Caco-2 (cell line): ENCODE measurements at regions of chr17 and their contacts with region 1.

Region 1: DNA sequence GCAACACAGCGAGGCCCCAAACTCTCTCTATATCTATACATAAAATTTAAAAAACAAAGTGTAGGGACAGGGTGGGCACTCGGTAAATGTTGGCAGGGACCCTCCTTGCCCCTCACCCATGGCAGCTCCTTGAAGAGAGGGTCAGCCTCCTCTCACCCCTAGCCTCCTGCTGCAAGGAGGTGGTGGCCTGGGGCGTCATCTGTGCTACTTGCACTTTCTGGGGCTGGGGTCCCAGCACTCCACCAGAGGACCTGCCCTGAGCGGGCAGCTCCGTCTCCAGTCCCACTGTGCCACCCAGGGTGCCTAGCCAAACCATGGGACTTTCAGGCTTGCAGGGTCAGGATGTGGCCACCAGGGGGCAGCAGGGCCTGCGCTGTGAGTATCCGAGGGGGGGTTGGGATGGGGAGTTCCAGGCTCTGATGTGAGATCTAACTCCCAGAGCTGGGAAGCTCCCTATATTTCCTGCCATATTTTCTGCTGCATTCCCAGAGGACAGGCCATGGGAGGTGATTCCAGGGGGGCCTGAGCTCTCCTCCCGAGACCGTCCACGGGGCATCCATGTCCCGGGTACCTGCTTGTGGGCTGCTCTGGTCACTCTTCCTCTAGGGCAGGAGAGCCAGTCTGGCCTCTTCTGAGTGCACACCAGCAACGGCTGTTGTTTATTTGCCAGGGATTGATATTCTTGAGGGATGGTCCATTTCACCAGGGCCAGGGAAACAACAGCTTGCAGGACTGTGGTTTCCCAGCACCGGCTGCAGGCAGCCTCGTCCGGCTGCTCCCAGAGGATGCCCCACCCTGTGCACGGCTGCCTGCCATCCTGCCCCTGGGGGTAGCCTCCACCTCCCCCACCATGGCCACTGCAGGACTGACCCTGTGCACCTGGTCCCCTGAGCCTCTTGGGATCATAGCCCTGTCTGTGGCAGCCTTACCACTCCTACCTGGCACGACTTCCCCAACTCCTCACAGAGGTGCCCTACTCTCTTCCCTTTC is 1.1 kb downstream of the GPR142 start:
- DNase-seq: peak; percentile 72 to 75
- H3K4me3 ChIP-seq: no peak overlapping the region
- H3K4me3 Mint-ChIP-seq: no peak overlapping the region
- H3K27ac Mint-ChIP-seq: no peak overlapping the region
- H3K4me1 ChIP-seq: peaks cover 7% of the 10 kb centered on the region
- H3K4me1 Mint-ChIP-seq: peaks cover 5% of the 10 kb centered on the region
- H3K27me3 ChIP-seq: no peaks in the 10 kb centered on the region
- H3K27me3 Mint-ChIP-seq: no peaks in the 10 kb centered on the region
- CTCF ChIP-seq: peak; percentile 88 to 97

Region 2: DNA sequence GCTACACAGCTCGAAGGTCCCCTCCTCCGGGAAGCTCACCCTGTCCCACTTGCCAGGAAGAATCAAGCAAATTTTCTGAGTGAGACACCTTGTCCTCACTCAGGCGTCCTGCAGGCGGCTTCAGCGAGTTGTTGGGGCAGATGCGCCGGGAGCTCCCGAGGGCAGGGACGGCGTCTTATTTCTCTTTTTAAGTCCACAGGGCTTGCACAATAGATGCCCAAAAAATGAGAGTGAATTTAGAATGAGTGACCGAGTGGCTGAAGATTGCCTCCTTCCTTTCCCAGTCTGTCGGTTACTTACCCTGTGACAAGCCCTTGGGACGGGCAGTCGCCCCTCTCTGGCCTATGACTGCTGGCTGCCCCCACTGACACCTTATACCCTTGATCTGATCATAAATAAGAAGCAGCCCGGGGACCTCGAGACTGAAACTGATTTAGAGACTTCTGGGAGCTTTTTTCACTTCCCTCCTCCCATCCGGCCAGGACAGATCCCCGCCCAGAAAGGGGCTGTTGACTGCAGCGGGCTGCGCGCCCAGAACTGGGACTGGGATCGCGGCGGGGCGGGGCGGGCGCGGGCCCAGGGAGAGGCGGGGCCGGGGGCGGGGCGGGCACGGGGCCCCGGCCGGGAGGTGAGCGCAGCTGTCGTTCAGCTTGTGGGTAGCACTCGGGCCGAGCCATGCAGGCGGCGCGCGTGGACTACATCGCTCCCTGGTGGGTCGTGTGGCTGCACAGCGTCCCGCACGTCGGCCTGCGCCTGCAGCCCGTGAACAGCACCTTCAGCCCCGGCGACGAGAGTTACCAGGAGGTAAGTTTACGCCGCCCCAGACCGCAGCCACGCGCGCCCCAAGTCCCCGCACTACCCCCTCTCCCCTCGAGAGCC is 155.2 kb before region 1 on chr17 and contains the start of gene TTYH2:
- CTCF ChIA-PET with region 1: interaction called, 6 read pairs
- POLR2A ChIA-PET with region 1: no interaction called
- intact Hi-C with region 1: loop called (anchors 10 kb)
- DNase-seq: peak; percentile 86 to 88
- H3K4me3 ChIP-seq: peak within 1 kb of the TSS; percentile 67
- H3K4me3 Mint-ChIP-seq: peak within 1 kb of the TSS; percentile 76
- H3K27ac Mint-ChIP-seq: peak within 1 kb of the TSS; percentile 83
- H3K4me1 ChIP-seq: peaks cover 21% of the 10 kb centered on the region
- H3K4me1 Mint-ChIP-seq: peaks cover 26% of the 10 kb centered on the region
- H3K27me3 ChIP-seq: no peaks in the 10 kb centered on the region
- H3K27me3 Mint-ChIP-seq: no peaks in the 10 kb centered on the region
- CTCF ChIP-seq: no peak
- total RNA-seq, gene TTYH2: 4.6 and 5.4 TPM in 2 replicates

Region 3: DNA sequence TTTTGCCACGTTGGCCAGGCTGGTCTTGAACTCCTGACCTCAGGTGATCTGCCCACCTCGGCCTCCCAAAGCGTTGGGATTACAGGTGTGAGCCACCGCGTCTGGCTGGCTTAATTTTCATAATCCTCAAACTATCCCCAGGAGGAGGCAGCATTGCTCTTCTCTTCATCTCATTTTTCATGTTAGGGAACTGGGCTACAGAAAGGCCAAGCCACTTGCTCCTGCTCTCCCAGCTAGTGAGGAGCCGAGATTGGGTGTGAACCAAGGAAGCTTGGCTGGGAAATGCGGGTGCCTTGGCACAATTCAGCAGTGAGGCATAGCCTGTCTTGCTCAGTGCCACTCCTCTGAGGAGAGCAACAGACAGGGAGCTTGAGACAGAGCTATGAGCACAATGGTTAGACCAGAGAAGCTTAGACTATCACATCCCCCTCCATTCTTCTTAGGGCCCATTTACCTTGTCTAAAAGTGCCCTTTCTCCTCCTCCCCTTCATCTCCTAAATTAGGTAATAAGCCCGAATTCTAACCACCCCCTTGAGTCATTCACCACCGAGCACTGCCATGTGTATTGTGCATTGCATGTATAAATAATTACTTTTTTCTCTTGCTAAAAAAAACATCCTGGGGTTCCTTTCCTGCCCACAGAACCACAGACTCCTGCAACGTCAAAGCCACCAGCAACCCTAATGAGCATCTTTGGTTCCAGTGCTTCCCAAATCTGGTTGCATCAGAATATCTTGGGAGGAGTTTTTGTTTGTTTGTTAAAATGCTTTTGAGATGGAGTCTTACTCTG is 62.3 kb before region 1 on chr17:
- CTCF ChIA-PET with region 1: interaction called, 4 read pairs
- POLR2A ChIA-PET with region 1: interaction called, 15 read pairs
- intact Hi-C with region 1: no loop called
- DNase-seq: no peak
- H3K4me3 ChIP-seq: no peak overlapping the region
- H3K4me3 Mint-ChIP-seq: no peak overlapping the region
- H3K27ac Mint-ChIP-seq: no peak overlapping the region
- H3K4me1 ChIP-seq: no peaks in the 10 kb centered on the region
- H3K4me1 Mint-ChIP-seq: no peaks in the 10 kb centered on the region
- H3K27me3 ChIP-seq: no peaks in the 10 kb centered on the region
- H3K27me3 Mint-ChIP-seq: no peaks in the 10 kb centered on the region
- CTCF ChIP-seq: no peak

Region 4: DNA sequence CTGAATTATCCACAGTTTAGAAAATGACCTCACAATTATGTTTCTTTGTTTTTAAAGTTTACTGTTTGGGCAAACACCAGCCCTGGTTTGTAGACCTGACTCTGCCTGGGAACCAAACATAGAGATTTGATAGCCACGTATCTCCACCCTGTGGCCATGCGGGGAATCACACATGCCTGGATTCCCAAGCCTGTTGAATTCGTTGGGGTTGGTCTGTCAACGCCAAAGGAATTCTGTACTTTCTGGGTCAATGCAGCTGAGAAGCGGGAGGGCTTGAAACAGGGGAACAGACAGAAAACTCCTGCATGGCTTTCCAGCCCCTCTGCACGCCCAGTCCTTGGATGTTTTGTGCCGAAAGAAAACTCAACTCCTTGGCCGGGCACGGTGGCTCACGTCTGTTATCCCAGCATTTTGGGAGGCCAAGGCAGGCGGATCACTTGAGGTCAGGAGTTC is 125.0 kb after region 1 on chr17:
- CTCF ChIA-PET with region 1: interaction called, 4 read pairs
- POLR2A ChIA-PET with region 1: no interaction called
- intact Hi-C with region 1: loop called (anchors 1 kb)
- DNase-seq: peak; percentile 72 to 84
- H3K4me3 ChIP-seq: no peak overlapping the region
- H3K4me3 Mint-ChIP-seq: no peak overlapping the region
- H3K27ac Mint-ChIP-seq: no peak overlapping the region
- H3K4me1 ChIP-seq: no peaks in the 10 kb centered on the region
- H3K4me1 Mint-ChIP-seq: no peaks in the 10 kb centered on the region
- H3K27me3 ChIP-seq: no peaks in the 10 kb centered on the region
- H3K27me3 Mint-ChIP-seq: peaks cover 10% of the 10 kb centered on the region
- CTCF ChIP-seq: peak; percentile 89 to 93

Region 5: DNA sequence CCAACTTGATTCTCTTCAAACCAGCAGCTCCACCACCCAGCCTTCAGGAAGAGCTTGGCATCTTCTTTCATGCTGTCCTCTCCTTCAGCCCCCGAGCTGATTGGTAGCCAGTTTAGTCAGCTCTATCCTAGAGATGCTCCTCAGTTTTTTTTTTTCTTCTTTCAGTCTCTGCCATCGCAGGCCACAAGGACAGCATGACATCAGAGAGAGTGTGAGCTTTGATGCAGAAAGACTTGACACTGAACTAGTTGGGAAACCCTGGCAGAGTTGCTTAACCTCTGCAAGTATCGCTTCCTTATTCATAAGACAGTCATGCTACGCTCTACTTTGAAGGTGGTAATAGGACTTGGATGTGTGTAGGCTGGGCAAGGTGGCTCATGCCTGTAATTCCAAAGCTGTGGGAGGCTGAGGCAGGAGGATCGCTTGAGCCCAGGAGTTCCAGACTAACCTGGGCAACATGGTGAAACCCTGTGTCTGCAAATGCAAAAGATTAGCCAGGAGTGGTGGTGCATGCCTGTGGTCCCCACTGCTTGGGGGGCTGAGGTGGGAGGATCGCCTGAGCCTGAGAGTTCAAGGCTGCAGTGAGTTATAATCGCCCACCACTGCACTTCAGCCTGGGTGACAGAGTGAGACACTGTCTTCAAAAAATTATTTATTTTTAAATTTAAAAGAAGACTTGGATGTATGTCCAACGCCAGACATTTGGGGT is 160.3 kb after region 1 on chr17:
- CTCF ChIA-PET with region 1: interaction called, 10 read pairs
- POLR2A ChIA-PET with region 1: no interaction called
- intact Hi-C with region 1: loop called (anchors 5 kb)
- DNase-seq: no peak
- H3K4me3 ChIP-seq: no peak overlapping the region
- H3K4me3 Mint-ChIP-seq: no peak overlapping the region
- H3K27ac Mint-ChIP-seq: no peak overlapping the region
- H3K4me1 ChIP-seq: no peaks in the 10 kb centered on the region
- H3K4me1 Mint-ChIP-seq: no peaks in the 10 kb centered on the region
- H3K27me3 ChIP-seq: 0 out of 2 replicates have a peak, but pooled peaks cover 1% of the 10 kb centered on the region
- H3K27me3 Mint-ChIP-seq: peaks cover 32% of the 10 kb centered on the region
- CTCF ChIP-seq: no peak